H1 (cell line): ENCODE measurements at regions of chrX and their contacts with region 1.

Region 1: GRCh38 chrX:154472688-154473632 is 6.1 kb downstream of the LAGE3 start:
- DNase-seq: no peak
- H3K4me3 ChIP-seq: no peak overlapping the region
- H3K27ac ChIP-seq: no peak overlapping the region
- H3K4me1 ChIP-seq: no peaks in the 10 kb centered on the region
- H3K27me3 ChIP-seq: no peaks in the 10 kb centered on the region
- CTCF ChIP-seq: no peak; a peak in 1 of 4 replicates
- EP300 ChIP-seq: no peak
- POLR2A ChIP-seq: no peak
- RAD21 ChIP-seq: peak in 1 of 2 experiments; percentile 21; a peak in 1 of 4 replicates

Region 2: DNA sequence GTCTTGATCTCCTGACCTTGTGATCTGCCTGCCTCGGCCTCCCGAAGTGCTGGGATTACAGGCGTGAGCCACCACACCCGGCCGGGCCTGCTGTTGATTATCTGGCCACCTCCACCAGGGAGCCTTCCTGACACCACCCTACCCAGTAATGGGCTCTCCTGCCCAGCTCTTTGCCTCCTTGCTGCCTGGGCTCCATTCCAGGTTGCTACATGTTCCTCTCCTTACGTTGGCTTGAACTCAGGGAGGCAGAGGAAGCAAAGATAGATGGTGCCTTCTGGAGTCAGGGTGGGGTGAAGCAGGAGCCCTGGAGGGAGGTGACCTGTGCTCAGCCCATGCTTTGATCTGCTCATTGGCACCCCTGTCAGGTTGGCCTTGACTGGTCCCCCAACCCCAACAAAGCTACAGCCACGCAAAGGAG is 124.8 kb before region 1 on chrX:
- CTCF ChIA-PET with region 1: no interaction called
- POLR2A ChIA-PET with region 1: no interaction called
- DNase-seq: no peak
- H3K4me3 ChIP-seq: no peak overlapping the region
- H3K27ac ChIP-seq: no peak overlapping the region
- H3K4me1 ChIP-seq: no peaks in the 10 kb centered on the region
- H3K27me3 ChIP-seq: no peaks in the 10 kb centered on the region
- CTCF ChIP-seq: no peak
- EP300 ChIP-seq: no peak
- POLR2A ChIP-seq: no peak
- RAD21 ChIP-seq: no peak

Region 3: GRCh38 chrX:154458114-154458953 is 14.6 kb before region 1 on chrX and contains the start of gene PLXNA3:
- CTCF ChIA-PET with region 1: interaction called, 11 read pairs
- POLR2A ChIA-PET with region 1: interaction called, 5 read pairs
- DNase-seq: peak in 1 of 2 experiments; percentile 62
- H3K4me3 ChIP-seq: peak within 1 kb of the TSS; percentile 47 to 71 (median 58)
- H3K27ac ChIP-seq: no peak within 1 kb of the TSS
- H3K4me1 ChIP-seq: peaks cover 0 to 2% (median 0%) of the 10 kb centered on the region in 4 experiments; a peak in 2 of 7 replicates
- H3K27me3 ChIP-seq: peaks cover 0 to 3% (median 0%) of the 10 kb centered on the region in 4 experiments; a peak in 1 of 7 replicates
- CTCF ChIP-seq: no peak
- EP300 ChIP-seq: peak in 1 of 2 experiments; percentile 69; a peak in 1 of 3 replicates
- POLR2A ChIP-seq: peak in 1 of 2 experiments; percentile 27; a peak in 1 of 3 replicates
- RAD21 ChIP-seq: no peak
- total RNA-seq, gene PLXNA3: 18.2 and 23.5 TPM in 2 replicates